Activated CD4-positive, alpha-beta T cell treated with anti-CD3 and anti-CD28 coated beads for 36 hours (primary cell): ENCODE measurements at regions of chr12 and their contacts with region 1.

Region 1: GRCh38 chr12:12356886-12357718 is at the start of gene BORCS5:
- DNase-seq: peak; percentile 99
- ATAC-seq: peak; percentile 94
- H3K4me3 Mint-ChIP-seq: peak within 1 kb of the TSS; percentile 98
- H3K27ac Mint-ChIP-seq: peak within 1 kb of the TSS; percentile 99
- H3K4me1 Mint-ChIP-seq: peaks cover 38% of the 10 kb centered on the region
- H3K27me3 Mint-ChIP-seq: no peaks in the 10 kb centered on the region
- total RNA-seq, gene BORCS5: 41.8 to 45.0 TPM

Region 2: DNA sequence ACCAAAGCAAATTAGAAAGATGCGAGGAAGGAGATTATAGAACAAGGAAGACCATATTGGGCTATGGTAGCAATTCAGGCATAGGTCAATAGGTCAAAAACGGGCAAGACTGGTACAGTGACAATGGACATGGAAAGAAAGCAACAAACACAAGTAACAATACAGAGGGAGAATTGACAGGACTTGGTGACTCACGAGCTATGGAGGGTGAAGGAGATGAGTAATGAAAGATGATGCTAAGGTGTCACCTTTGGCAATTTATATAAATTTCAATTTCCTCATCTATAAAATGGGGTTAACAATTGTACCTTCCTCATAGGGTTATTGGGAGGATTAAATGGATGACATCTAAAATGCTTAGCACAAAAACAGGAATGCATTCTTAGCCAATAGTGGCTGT is 220.7 kb after region 1 on chr12:
- CTCF ChIA-PET with region 1: no interaction called
- POLR2A ChIA-PET with region 1: no interaction called
- intact Hi-C with region 1: no loop called
- DNase-seq: no peak
- ATAC-seq: peak; percentile 30
- H3K4me3 Mint-ChIP-seq: no peak overlapping the region
- H3K27ac Mint-ChIP-seq: no peak overlapping the region
- H3K4me1 Mint-ChIP-seq: peaks cover 15% of the 10 kb centered on the region
- H3K27me3 Mint-ChIP-seq: no peaks in the 10 kb centered on the region

Region 3: GRCh38 chr12:12813120-12814101 is 456.3 kb after region 1 on chr12 and contains the start of gene DDX47:
- CTCF ChIA-PET with region 1: interaction called, 4 read pairs
- POLR2A ChIA-PET with region 1: no interaction called
- intact Hi-C with region 1: loop called in 1 of 2 experiments (anchors 5 kb)
- DNase-seq: peak; percentile 99
- ATAC-seq: peak; percentile 90
- H3K4me3 Mint-ChIP-seq: peak within 1 kb of the TSS; percentile 95
- H3K27ac Mint-ChIP-seq: peak within 1 kb of the TSS; percentile 91
- H3K4me1 Mint-ChIP-seq: peaks cover 61% of the 10 kb centered on the region
- H3K27me3 Mint-ChIP-seq: no peaks in the 10 kb centered on the region
- total RNA-seq, gene DDX47: 91.3 to 91.9 TPM

Region 4: DNA sequence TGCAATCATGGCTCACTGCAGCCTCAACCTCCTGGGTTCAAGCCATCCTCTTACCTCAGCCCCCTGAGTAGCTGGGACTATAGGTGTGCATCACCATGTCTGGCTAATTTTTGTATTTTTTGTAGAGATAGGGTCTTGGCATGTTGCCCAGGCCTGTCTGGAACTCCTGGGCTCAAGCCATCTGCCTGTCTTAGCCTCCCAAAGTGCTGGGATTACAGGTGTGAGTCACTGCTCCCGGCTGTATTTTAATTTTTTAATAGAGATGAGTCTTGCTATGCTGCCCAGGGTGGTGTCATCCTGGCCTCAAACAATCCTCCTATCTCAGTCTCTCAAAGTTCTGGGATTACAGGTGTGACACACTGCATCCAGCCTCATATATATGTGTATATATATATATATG is 502.6 kb after region 1 on chr12:
- CTCF ChIA-PET with region 1: no interaction called
- POLR2A ChIA-PET with region 1: no interaction called
- intact Hi-C with region 1: no loop called
- DNase-seq: no peak
- ATAC-seq: no peak
- H3K4me3 Mint-ChIP-seq: no peak overlapping the region
- H3K27ac Mint-ChIP-seq: no peak overlapping the region
- H3K4me1 Mint-ChIP-seq: no peaks in the 10 kb centered on the region
- H3K27me3 Mint-ChIP-seq: no peaks in the 10 kb centered on the region